AG04449 (cell line): ENCODE measurements at regions of chr12 and their contacts with region 1.

Region 1: DNA sequence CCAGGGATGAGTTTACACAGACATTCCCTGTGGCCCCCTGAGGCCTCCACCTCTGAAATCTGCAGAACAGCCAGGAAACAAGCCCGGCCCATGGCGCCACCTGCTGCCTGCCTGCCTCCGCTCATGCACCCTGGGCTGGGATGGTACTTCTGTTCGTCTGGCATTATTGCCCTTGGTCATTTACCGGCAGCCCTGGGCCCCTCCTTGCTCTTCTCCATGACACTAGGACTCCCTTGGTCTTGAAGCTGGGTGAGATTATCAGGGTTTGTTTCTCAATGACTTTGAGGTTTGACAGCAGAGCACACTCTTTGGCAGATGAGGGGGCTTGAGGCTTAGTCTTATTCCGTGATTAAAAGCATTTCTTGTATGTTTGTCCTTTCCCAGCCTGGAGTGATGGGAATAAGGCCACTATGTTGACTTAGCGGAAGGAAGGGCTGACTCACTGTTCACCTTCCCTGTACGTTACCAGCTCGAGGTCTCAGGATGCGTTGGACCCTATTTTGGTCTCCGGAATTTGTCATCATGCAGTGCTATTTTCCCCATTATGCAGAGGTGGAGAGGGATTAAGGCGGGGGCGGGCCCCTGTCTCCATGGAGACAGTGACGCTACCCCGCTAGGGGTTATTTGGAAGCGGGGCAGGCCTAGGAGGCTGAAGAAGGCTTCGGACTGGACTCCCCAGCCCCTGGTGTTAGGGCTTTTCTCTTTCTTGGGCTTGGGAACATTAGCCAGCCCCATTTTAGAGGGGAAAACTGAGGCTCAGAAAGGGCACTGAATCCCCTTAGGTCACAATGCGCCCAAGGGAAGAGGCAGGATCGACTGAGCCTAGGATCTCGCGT is 706 bp upstream of the PEX5 start:
- DNase-seq: no peak
- H3K4me3 ChIP-seq: peak overlapping the region; percentile 93
- CTCF ChIP-seq: peak; percentile 94

Region 2: DNA sequence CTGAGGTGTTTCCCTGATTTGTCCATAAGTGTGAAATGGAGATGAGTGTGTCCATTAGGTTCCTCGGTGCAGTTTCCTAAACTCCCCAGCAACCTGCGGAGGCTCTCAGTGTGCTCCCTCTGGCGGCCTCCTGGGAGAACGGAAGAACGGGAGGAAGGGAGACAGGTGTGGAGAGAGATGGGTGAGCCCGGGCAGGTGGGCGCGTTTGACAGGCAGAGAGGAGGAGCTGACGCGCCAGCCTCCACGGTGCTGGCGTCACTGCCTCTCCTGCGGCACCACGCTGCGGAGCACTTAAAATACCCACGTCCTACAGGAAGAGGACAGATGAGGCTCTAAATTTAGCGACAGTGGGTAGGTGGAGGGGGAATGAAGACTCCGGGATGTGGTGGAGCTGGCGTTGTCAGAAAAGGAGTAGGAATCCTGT is 26.1 kb before region 1 on chr12:
- CTCF ChIA-PET with region 1: interaction called, 14 read pairs
- POLR2A ChIA-PET with region 1: no interaction called
- DNase-seq: no peak
- H3K4me3 ChIP-seq: no peak overlapping the region
- CTCF ChIP-seq: peak; percentile 57

Region 3: DNA sequence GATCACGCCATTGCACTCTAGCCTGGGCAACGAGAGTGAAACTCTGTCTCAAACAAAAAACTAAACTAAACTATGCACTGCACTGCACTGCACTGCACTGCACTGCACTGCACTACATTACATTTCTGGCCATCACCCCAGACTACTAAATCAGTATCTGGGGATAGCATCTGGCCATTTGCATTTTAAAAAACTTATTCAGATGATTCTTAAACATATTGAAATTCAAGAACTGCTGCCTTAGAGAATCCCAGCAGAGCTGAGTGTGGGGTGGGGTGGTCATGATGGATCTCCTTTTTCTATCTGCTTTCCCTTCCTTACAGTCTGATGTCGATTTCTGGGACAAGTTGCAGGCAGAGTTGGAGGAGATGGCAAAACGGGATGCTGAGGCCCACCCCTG is 14.3 kb after region 1 on chr12:
- CTCF ChIA-PET with region 1: interaction called, 15 read pairs
- POLR2A ChIA-PET with region 1: no interaction called
- DNase-seq: no peak
- H3K4me3 ChIP-seq: no peak overlapping the region
- CTCF ChIP-seq: no peak